Posterior vena cava (tissue), 2 donors: ENCODE measurements at regions of chr6 and their contacts with region 1.

Region 1: GRCh38 chr6:170057961-170058858 is 232.7 kb downstream of the DLL1 start:
- DNase-seq: peak; percentile 78

Region 2: DNA sequence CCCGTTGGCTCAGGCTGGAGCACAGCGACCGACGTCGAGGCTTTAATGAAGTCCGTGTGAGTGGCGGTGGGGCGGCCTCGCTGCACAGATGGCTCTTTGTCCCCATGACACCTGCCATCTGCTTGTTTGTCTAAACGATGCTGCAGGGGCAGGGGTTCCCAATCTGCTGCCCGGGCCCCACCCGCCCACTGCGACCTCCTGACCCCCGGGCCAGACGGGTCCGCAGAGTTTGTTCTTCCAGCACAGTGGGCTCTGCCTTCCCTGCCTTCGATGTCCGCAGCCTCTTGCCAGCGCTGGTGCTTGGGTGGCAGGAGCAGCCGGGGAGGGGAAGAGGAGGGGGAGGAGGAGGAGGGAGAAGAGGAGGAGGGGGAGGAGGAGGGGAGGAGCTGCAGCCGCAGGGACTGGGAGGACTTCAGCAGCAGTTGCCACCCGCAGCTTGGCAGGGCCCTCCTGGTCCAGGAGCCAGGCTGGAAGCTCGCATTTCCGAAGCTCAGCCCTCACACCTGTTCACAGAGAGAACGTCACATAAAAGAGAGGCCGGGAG is 22.7 kb after region 1 on chr6:
- intact Hi-C with region 1: loop called in 1 of 2 experiments (anchors 1 kb)
- DNase-seq: peak; percentile 73